Heart left ventricle (tissue), 16 donors: ENCODE measurements at regions of chr12 and their contacts with region 1.

Region 1: GRCh38 chr12:107685360-107686248 is at the start of gene PWP1:
- DNase-seq: peak; percentile 93 to 98 (median 96)
- ATAC-seq: peak; percentile 95 to 99 (median 96)
- H3K4me3 ChIP-seq: peak within 1 kb of the TSS; percentile 70 to 99 (median 88)
- H3K27ac ChIP-seq: peak within 1 kb of the TSS in 11 of 12 donors; percentile 52 to 85 (median 73)
- H3K4me1 ChIP-seq: peaks cover 0 to 26% (median 18%) of the 10 kb centered on the region in 12 donors
- H3K27me3 ChIP-seq: no peaks in the 10 kb centered on the region
- CTCF ChIP-seq: peak in 1 of 12 donors; percentile 10
- POLR2A ChIP-seq: peak; percentile 7 to 67
- total RNA-seq, gene PWP1: 11.7 to 49.7 (median 17.0) TPM

Region 2: DNA sequence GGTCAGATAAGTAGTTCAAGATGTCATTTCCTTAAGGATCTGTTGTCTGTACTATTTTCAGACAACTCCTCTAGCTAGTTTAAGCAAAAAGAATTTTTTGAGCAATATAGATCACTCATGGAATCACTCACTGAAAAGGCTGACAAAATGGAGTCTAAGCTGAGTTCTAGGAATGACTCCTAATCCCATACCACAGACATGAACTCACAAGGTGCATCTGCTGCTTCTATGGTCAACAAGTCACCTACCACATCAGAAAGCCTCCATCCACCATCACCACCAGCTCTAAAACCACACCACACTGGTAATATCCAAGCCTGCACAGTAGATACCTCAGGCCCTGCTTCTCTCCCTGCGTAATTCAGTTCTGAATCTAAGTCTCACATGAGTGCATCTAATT is 33.0 kb after region 1 on chr12:
- intact Hi-C with region 1: no loop called
- DNase-seq: no peak
- ATAC-seq: no peak
- H3K4me3 ChIP-seq: no peak overlapping the region
- H3K27ac ChIP-seq: no peak overlapping the region
- H3K4me1 ChIP-seq: no peaks in the 10 kb centered on the region
- H3K27me3 ChIP-seq: no peaks in the 10 kb centered on the region
- CTCF ChIP-seq: no peak
- POLR2A ChIP-seq: no peak

Region 3: DNA sequence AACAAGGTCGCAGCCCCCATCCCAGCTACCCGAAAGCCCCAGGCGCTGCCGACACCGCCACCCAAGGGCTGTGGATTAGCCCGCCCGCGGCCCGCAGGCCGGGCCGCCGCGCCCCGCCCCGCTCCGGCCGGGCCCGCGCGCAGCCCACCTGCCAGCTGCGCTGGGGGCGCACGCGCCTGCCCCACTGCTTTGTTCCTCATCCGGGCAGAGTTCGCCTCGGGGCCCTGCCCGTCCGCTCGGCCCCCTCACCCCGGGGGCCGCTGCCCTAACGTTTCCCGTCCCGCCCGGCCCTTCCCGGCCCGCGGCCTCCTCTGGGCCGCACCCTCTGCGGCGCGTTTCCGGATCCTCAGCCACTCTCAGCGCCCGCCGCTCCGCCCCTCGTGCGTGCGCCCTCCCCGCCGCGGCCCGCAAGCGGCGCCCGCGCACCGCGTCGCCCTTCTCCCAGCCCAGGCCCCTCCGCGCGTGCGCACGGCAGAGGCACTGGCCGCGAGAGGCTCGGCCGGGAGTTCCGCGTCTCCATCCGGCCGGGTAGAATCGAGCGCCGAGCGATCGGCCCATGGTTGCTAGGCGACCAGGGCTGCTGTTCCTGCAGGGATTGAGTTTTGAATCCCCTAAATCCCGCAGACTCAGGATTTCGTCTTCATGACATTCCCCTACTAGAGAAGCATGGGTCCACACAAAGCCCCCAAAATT is 75.4 kb after region 1 on chr12 and contains the start of gene PRDM4:
- intact Hi-C with region 1: loop called in 7 of 10 experiments (anchors 1 to 10 kb)
- DNase-seq: peak; percentile 93 to 96 (median 96)
- ATAC-seq: peak; percentile 96 to 99 (median 98)
- H3K4me3 ChIP-seq: peak within 1 kb of the TSS; percentile 76 to 94 (median 85)
- H3K27ac ChIP-seq: peak within 1 kb of the TSS in 11 of 12 donors; percentile 59 to 87 (median 77)
- H3K4me1 ChIP-seq: peaks cover 5 to 35% (median 28%) of the 10 kb centered on the region in 12 donors
- H3K27me3 ChIP-seq: no peaks in the 10 kb centered on the region
- CTCF ChIP-seq: peak in 11 of 12 donors; percentile 13 to 66 (median 44)
- POLR2A ChIP-seq: peak; percentile 45 to 93
- total RNA-seq, gene PRDM4: 11.6 to 24.6 (median 15.0) TPM